T-cell (primary cell): ENCODE measurements at regions of chr6 and their contacts with region 1.

Region 1: DNA sequence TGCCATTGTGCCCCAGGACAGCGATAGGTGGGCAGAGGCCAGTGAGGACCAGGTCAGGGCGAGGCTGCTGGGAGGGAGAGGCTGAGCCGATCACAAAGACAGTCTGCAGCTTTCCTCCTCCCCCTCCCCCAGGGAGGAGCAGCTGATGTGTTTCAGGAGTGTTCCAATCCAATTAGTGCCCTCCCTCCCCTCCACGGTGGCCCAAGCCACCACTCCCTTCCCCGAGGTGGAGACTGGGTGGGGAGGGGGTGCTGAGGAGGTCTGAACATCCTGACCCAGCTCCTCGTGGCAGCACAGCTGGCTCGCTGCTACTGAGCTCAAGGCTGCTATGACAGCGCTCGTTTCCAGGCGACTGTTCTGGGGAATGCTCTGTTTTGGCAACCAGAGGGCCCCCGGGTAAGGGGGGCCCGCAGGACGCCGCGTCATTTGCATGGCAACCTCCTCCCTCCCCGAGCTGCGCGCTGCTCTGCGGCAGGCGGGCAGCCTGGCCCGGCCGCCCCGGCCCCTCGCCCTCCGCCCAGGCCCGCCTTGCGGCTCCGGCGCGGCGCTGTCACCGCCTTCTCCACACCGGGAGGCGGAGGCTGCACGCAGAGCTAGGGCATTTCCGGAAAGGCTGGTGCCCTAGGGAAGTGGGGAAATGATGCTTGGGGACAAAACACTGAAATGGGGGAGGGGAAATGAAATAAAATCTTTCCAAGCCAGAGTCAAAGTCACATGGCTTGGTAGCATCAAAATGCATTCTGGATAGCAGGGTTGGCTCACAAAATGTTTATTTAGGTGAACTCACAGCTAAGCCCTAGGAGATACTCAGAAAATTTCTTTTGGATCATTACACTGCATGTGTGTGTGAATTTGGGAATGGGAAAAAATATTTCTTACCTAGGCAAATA is 67.4 kb upstream of the PIM1 start:
- DNase-seq: peak; percentile 29 to 86 (median 73)
- ATAC-seq: peak; percentile 86 to 94 (median 88)
- H3K4me3 ChIP-seq: peak overlapping the region; percentile 36 to 66
- H3K4me3 Mint-ChIP-seq: peak overlapping the region; percentile 54 to 70 (median 69)
- H3K27ac ChIP-seq: peak overlapping the region; percentile 79
- H3K27ac Mint-ChIP-seq: peak overlapping the region; percentile 77
- H3K4me1 ChIP-seq: peaks cover 22 to 24% of the 10 kb centered on the region in 2 experiments
- H3K4me1 Mint-ChIP-seq: peaks cover 21 to 36% (median 28%) of the 10 kb centered on the region in 3 donors
- H3K27me3 ChIP-seq: no peaks in the 10 kb centered on the region
- H3K27me3 Mint-ChIP-seq: no peaks in the 10 kb centered on the region

Region 2: GRCh38 chr6:37051138-37052026 is 51.1 kb before region 1 on chr6:
- CTCF ChIA-PET with region 1: interaction called in 1 of 2 experiments, 6 read pairs
- POLR2A ChIA-PET with region 1: interaction called in 1 of 2 experiments, 10 read pairs
- DNase-seq: peak; percentile 76 to 93 (median 86)
- ATAC-seq: peak; percentile 53 to 79 (median 62)
- H3K4me3 ChIP-seq: no peak overlapping the region
- H3K4me3 Mint-ChIP-seq: peak overlapping the region; percentile 31 to 72 (median 49)
- H3K27ac ChIP-seq: peak overlapping the region; percentile 93
- H3K27ac Mint-ChIP-seq: peak overlapping the region; percentile 87 to 95
- H3K4me1 ChIP-seq: peaks cover 44 to 60% of the 10 kb centered on the region in 2 experiments
- H3K4me1 Mint-ChIP-seq: peaks cover 58 to 66% (median 62%) of the 10 kb centered on the region in 3 donors
- H3K27me3 ChIP-seq: no peaks in the 10 kb centered on the region
- H3K27me3 Mint-ChIP-seq: no peaks in the 10 kb centered on the region